ENCODE measurements at regions of chr3 and their contacts with region 1.

Region 1: GRCh38 chr3:114231616-114232015 is 5.8 kb downstream of the ZNF80 start:
- DNase-seq: no peak
- ATAC-seq: peak; percentile 82
- H3K4me3 Mint-ChIP-seq: peak overlapping the region; percentile 52
- H3K27ac Mint-ChIP-seq: peak overlapping the region; percentile 95
- H3K4me1 Mint-ChIP-seq: peaks cover 56% of the 10 kb centered on the region
- H3K27me3 Mint-ChIP-seq: no peaks in the 10 kb centered on the region

Region 2: GRCh38 chr3:114213627-114214541 is 17.7 kb before region 1 on chr3:
- POLR2A ChIA-PET with region 1: interaction called, 99 read pairs
- DNase-seq: peak; percentile 68
- ATAC-seq: peak; percentile 62
- H3K4me3 Mint-ChIP-seq: no peak overlapping the region
- H3K27ac Mint-ChIP-seq: no peak overlapping the region
- H3K4me1 Mint-ChIP-seq: peaks cover 29% of the 10 kb centered on the region
- H3K27me3 Mint-ChIP-seq: no peaks in the 10 kb centered on the region

Region 3: DNA sequence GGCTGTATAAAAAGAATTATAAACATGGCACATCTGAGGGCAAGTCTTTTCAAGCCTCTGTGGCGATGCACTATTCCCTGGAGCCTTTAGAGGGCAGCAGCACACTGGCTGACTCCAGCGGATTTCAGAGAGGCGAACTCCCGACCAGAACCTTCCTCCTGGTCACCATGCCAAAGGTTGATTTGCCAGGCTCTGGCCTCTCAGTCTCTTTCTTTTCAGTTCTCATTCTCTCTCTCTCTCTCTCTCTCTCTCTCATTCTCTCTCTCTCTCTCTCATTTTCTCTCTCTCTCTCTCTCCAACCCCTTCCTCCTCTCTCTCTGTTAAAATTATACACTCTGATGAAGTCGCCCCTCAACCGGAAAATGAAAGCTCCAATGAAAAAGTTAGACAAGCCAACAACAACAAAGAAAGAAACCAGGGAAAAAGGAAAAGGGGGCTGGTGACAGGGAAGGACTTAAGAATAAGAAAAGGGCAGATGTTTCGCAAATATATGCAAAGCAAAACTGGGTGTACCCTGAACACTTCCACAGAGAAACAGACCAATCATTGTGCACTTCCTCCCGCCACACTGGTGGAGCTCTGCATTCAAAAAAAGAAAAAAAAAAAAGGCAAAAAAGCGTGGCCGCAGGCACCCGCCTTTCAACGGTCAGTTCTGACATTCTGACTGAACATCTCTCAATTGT is 152.4 kb after region 1 on chr3:
- POLR2A ChIA-PET with region 1: no interaction called
- DNase-seq: peak; percentile 62
- ATAC-seq: peak; percentile 85
- H3K4me3 Mint-ChIP-seq: peak overlapping the region; percentile 60
- H3K27ac Mint-ChIP-seq: peak overlapping the region; percentile 70
- H3K4me1 Mint-ChIP-seq: peaks cover 9% of the 10 kb centered on the region
- H3K27me3 Mint-ChIP-seq: no peaks in the 10 kb centered on the region

Region 4: GRCh38 chr3:114478801-114479200 is 247.2 kb after region 1 on chr3:
- POLR2A ChIA-PET with region 1: no interaction called
- DNase-seq: no peak
- ATAC-seq: no peak
- H3K4me3 Mint-ChIP-seq: no peak overlapping the region
- H3K27ac Mint-ChIP-seq: no peak overlapping the region
- H3K4me1 Mint-ChIP-seq: peaks cover 16% of the 10 kb centered on the region
- H3K27me3 Mint-ChIP-seq: no peaks in the 10 kb centered on the region